H1 (cell line): ENCODE measurements at regions of chr19 and their contacts with region 1.

Region 1: DNA sequence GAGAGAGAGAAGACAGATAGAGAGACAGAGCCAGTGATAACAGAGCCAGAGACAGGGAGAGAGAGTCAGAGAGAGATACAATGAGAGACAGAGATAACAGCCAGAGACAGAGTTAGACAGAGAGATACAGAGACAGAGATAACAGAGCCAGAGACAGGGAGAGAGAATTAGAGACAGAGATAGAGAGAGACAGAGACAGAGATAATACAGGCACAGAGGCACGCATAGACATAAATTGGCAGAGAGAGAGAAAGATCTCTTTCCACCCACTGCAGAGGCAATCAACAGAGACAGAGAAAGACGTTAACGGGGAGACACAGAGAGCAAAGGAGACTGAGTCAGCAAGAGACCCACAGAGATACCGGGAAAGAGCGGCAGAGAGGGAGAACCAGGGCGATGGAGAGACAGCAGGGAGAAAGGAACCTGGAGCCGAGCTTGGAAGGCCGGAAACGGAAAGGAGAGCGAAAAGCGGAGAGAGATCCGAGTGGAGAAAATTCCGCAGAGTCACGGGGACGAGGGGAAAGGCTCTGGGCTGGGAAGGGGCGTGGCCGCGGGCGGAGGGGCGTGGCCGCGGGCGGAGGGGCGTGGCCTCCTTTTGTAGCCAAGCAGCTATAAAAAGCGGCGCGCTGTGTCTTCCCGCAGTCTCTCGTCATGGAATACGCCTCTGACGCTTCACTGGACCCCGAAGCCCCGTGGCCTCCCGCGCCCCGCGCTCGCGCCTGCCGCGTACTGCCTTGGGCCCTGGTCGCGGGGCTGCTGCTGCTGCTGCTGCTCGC is at the start of gene TNFSF9:
- DNase-seq: peak in 1 of 2 experiments; percentile 96
- H3K4me3 ChIP-seq: peak within 1 kb of the TSS; percentile 68 to 89 (median 72)
- H3K27ac ChIP-seq: no peak within 1 kb of the TSS
- H3K4me1 ChIP-seq: peaks cover 5 to 29% (median 19%) of the 10 kb centered on the region in 4 experiments
- H3K27me3 ChIP-seq: peaks cover 17 to 42% (median 39%) of the 10 kb centered on the region in 4 experiments
- CTCF ChIP-seq: no peak
- EP300 ChIP-seq: no peak
- POLR2A ChIP-seq: peak; percentile 81 to 95
- RAD21 ChIP-seq: no peak
- total RNA-seq, gene TNFSF9: 1.7 and 1.8 TPM in 2 replicates

Region 2: GRCh38 chr19:6452223-6452614 is 78.4 kb before region 1 on chr19:
- CTCF ChIA-PET with region 1: no interaction called
- POLR2A ChIA-PET with region 1: no interaction called
- DNase-seq: no peak
- H3K4me3 ChIP-seq: no peak overlapping the region
- H3K27ac ChIP-seq: no peak overlapping the region
- H3K4me1 ChIP-seq: no peaks in the 10 kb centered on the region
- H3K27me3 ChIP-seq: no peaks in the 10 kb centered on the region
- CTCF ChIP-seq: no peak
- EP300 ChIP-seq: no peak
- POLR2A ChIP-seq: no peak
- RAD21 ChIP-seq: no peak

Region 3: GRCh38 chr19:6489278-6490061 is 41.1 kb before region 1 on chr19:
- CTCF ChIA-PET with region 1: no interaction called
- POLR2A ChIA-PET with region 1: no interaction called
- DNase-seq: no peak
- H3K4me3 ChIP-seq: no peak overlapping the region
- H3K27ac ChIP-seq: no peak overlapping the region
- H3K4me1 ChIP-seq: no peaks in the 10 kb centered on the region
- H3K27me3 ChIP-seq: peaks cover 0 to 2% (median 0%) of the 10 kb centered on the region in 4 experiments; a peak in 1 of 7 replicates
- CTCF ChIP-seq: no peak
- EP300 ChIP-seq: no peak
- POLR2A ChIP-seq: no peak
- RAD21 ChIP-seq: no peak

Region 4: DNA sequence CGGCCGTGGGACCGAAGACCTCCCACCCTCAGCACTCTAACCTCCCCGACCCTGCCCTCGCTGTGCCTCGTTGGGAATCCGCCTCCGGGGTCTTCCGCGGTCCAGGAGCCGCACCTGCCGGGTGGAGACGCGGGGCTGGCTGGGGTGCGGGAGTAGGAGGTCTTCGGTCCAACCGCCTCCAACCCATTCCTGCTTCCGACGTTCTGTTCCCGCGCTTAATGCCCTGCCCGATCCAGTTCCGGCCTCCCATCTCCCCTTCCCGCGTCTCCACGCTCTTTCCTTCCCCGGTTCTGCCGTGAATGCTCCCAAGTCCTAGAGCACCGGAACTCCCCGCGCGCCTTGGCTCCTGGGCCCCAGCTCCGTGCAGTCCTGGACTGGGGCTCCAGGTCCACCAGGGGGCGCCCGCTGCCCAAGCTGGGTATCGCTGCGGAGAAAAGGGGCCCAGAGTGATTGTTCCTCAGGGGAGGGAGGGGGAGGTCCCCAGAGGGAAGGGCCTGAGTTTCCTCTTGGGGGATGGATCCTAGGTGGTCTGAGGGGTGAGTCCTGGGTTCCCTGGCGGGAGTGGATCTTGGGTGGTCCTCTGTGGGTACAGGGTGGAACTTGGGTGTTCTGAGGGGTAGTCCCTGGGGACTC is 13.8 kb before region 1 on chr19:
- CTCF ChIA-PET with region 1: interaction called, 5 read pairs
- POLR2A ChIA-PET with region 1: interaction called, 20 read pairs
- DNase-seq: peak in 1 of 2 experiments; percentile 98
- H3K4me3 ChIP-seq: peak overlapping the region; percentile 38 to 70 (median 67)
- H3K27ac ChIP-seq: no peak overlapping the region
- H3K4me1 ChIP-seq: peaks cover 0 to 4% (median 1%) of the 10 kb centered on the region in 4 experiments; a peak in 2 of 7 replicates
- H3K27me3 ChIP-seq: peaks cover 0 to 2% (median 0%) of the 10 kb centered on the region in 4 experiments; a peak in 1 of 7 replicates
- CTCF ChIP-seq: peak; percentile 85 to 95 (median 92)
- EP300 ChIP-seq: no peak
- POLR2A ChIP-seq: no peak
- RAD21 ChIP-seq: peak; percentile 93 to 97

Region 5: DNA sequence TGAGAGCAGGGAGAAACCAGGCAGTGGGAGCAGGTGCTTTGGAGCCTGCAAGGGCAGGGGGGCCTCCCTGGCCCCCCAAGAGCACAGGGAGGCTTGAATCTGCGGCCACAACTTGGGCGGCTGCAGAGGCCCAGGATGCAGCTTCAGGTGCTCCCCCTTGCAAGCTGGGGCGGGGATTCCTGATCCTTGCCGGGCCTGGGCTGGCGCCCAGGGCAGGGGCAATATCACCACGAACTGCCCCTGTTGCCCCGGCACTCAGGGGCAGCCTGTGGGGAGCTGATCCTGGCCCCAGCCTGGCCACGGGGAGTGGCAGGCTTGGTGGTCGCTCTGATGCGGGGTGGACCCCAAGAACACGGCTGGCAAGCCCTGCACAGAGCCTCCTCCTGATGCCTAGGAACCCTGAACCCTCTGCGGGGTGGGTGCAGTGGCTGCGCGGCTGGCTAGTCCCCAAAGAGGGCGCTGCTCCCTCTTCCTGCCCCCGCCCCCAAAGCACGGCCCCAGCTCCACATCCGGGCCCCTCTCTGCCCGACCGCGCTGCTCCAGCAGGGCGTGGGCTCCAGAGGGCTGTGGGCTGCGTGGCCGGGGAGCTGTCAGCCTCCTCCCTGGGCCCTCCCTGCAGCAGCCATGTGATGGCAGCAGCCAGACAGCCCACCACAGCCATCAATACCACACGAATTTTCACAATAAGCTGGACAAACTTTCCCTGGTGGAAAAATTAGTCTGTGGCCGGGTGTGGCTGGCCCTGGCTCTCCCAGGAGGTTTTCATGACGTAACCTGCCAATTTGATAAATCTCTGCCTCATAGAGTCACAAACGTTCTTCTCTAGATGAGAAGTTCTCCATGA is 21.3 kb after region 1 on chr19:
- CTCF ChIA-PET with region 1: interaction called, 5 read pairs
- POLR2A ChIA-PET with region 1: interaction called, 10 read pairs
- DNase-seq: peak in 1 of 2 experiments; percentile 86
- H3K4me3 ChIP-seq: peak overlapping the region in 3 of 4 experiments; percentile 28 to 46 (median 38); a peak in 4 of 8 replicates
- H3K27ac ChIP-seq: no peak overlapping the region
- H3K4me1 ChIP-seq: peaks cover 0 to 5% (median 3%) of the 10 kb centered on the region in 4 experiments; a peak in 4 of 7 replicates
- H3K27me3 ChIP-seq: no peaks in the 10 kb centered on the region
- CTCF ChIP-seq: peak; percentile 68 to 84 (median 70)
- EP300 ChIP-seq: no peak; a peak in 1 of 3 replicates
- POLR2A ChIP-seq: no peak
- RAD21 ChIP-seq: peak; percentile 23 to 48; a peak in 2 of 4 replicates

Region 6: DNA sequence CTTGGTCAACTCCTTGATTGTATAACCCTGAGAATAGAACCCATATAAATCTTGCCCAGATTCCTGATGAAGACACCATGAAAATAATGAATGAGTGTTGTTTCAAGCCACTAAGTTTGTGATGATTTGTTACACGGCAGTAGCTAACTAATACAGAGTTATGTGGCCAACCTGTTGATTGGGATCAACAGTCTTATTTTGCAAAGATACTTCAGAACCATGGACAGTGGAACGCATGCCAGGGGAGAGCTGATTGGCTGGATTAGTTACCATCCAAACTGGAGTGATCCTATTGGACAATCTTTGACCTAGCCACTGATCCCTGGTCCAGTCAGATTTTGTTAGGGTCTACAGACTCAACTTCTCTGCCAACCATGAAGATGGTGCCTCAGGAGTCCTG is 33.8 kb after region 1 on chr19:
- CTCF ChIA-PET with region 1: no interaction called
- POLR2A ChIA-PET with region 1: no interaction called
- DNase-seq: no peak
- H3K4me3 ChIP-seq: no peak overlapping the region
- H3K27ac ChIP-seq: no peak overlapping the region
- H3K4me1 ChIP-seq: no peaks in the 10 kb centered on the region
- H3K27me3 ChIP-seq: no peaks in the 10 kb centered on the region
- CTCF ChIP-seq: no peak
- EP300 ChIP-seq: no peak
- POLR2A ChIP-seq: no peak
- RAD21 ChIP-seq: no peak

Region 7: GRCh38 chr19:6587093-6587820 is 56.7 kb after region 1 on chr19:
- CTCF ChIA-PET with region 1: interaction called, 7 read pairs
- POLR2A ChIA-PET with region 1: interaction called, 72 read pairs
- DNase-seq: peak in 1 of 2 experiments; percentile 56
- H3K4me3 ChIP-seq: peak overlapping the region; percentile 54 to 66 (median 58); a peak in 7 of 8 replicates
- H3K27ac ChIP-seq: no peak overlapping the region
- H3K4me1 ChIP-seq: peaks cover 0 to 16% (median 8%) of the 10 kb centered on the region in 4 experiments
- H3K27me3 ChIP-seq: peaks cover 29 to 62% (median 57%) of the 10 kb centered on the region in 4 experiments
- CTCF ChIP-seq: no peak
- EP300 ChIP-seq: no peak
- POLR2A ChIP-seq: no peak
- RAD21 ChIP-seq: no peak

Region 8: DNA sequence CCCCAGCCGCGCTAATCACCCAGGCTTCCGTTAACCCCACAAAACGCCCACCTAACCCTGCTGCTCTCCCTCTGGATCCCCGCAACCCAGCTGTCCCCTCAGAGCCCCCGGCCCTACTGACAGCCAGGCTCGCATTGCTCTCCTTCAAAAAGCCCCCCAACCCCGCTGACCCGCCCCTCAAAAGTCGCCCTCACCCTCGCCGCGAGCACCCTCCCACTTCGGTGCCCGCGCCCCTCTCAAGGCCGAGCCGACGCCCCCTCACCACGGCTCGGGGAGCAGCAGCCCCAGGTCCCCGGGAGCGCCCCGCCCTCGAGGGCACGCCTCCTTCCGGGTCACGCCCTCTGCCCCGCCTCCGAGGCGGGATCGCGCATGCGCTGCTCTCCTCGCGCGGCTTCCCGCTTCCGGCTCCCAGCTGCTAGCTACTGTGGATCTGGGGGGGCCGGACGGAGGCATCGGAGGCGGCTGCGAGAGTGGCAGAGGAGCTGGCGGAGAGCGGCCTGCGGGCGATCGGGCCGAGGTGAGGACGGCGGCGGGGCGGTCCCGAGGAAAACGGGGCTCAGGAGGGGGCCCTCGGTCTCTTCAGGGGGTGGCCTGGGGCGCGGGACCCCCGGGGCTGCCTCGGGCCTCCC is 864.3 kb after region 1 on chr19:
- CTCF ChIA-PET with region 1: no interaction called
- POLR2A ChIA-PET with region 1: no interaction called
- DNase-seq: peak; percentile 68 to 99
- H3K4me3 ChIP-seq: peak overlapping the region; percentile 91 to 96 (median 94)
- H3K27ac ChIP-seq: peak overlapping the region; percentile 42; the same call in 1 of the 2 replicates
- H3K4me1 ChIP-seq: peaks cover 0 to 8% (median 4%) of the 10 kb centered on the region in 4 experiments
- H3K27me3 ChIP-seq: 0 out of 7 replicates have a peak, but pooled peaks cover 0 to 1% (median 0%) of the 10 kb centered on the region in 4 experiments
- CTCF ChIP-seq: no peak
- EP300 ChIP-seq: no peak
- POLR2A ChIP-seq: peak in 1 of 2 experiments; percentile 71; a peak in 2 of 3 replicates
- RAD21 ChIP-seq: no peak